A673 (cell line): ENCODE measurements at regions of chr14 and their contacts with region 1.

Region 1: GRCh38 chr14:101964297-101965144 is at the start of gene DYNC1H1:
- DNase-seq: peak; percentile 97
- H3K4me3 ChIP-seq: peak within 1 kb of the TSS; percentile 96
- H3K27ac ChIP-seq: peak within 1 kb of the TSS; percentile 94
- H3K4me1 ChIP-seq: peaks cover 50% of the 10 kb centered on the region
- H3K27me3 ChIP-seq: no peaks in the 10 kb centered on the region
- CTCF ChIP-seq: no peak
- total RNA-seq, gene DYNC1H1: 794 and 833 TPM in 2 replicates

Region 2: DNA sequence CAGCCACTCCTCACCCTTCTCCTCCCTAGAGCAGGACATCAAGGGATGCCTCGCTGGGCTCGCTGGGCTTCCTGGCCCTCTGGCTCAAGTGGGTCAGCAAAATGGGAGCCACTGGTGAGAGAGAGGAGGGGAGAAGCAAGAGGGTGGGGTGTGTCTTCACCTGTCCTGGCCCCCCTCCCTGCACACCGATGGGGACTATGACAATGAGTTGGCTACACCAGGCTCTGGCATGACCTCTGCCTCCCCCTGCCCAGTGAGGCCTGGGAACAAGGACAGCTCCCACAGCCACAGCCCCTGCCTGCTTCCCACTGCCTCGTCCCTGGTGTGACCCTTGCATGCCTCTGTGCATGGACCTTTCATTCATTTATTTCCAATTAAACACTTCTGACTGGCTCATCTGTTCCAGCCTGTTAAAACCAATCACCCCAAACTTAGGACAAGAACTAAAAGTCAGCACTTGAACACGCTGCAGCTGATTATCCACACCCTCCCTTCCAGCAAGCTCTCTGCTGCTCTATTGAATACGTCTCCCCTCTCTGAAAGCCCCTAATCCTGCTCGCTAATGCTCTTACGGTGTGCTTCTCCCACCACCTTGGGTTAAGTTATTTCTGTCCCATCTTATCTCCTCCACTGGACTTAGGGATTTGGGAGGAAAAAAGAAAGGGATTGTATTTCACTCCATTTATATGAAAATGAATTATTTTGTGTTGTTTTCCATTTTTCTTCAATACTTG is 208.8 kb before region 1 on chr14:
- CTCF ChIA-PET with region 1: no interaction called
- POLR2A ChIA-PET with region 1: no interaction called
- intact Hi-C with region 1: no loop called
- DNase-seq: no peak
- H3K4me3 ChIP-seq: no peak overlapping the region
- H3K27ac ChIP-seq: no peak overlapping the region
- H3K4me1 ChIP-seq: no peaks in the 10 kb centered on the region
- H3K27me3 ChIP-seq: peaks cover 23% of the 10 kb centered on the region
- CTCF ChIP-seq: no peak

Region 3: GRCh38 chr14:101774006-101774795 is 190.3 kb before region 1 on chr14:
- CTCF ChIA-PET with region 1: interaction called, 3 read pairs
- POLR2A ChIA-PET with region 1: interaction called, 18 read pairs
- intact Hi-C with region 1: loop called (anchors 5 kb)
- DNase-seq: no peak
- H3K4me3 ChIP-seq: no peak overlapping the region
- H3K27ac ChIP-seq: no peak overlapping the region
- H3K4me1 ChIP-seq: peaks cover 3% of the 10 kb centered on the region
- H3K27me3 ChIP-seq: no peaks in the 10 kb centered on the region
- CTCF ChIP-seq: no peak

Region 4: DNA sequence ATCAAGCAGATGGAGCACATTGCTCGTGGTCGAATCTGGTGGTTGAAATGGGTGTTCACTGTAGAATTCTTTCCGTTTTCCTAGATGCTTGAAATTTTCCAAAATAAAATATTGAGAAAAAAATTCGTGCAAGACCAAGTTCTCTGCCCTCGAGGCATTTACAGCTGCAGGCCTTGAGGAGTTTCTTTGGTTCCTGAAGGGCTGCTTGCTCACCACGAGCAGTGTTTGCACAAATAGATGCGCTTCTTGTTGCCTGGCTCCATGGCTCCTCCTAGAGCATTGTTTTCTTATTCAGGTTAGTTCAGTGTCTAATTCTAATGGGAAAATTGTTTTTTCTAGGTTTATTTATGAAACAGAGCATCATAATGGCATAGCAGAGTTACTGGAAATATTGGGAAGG is 74.6 kb before region 1 on chr14:
- CTCF ChIA-PET with region 1: no interaction called
- POLR2A ChIA-PET with region 1: no interaction called
- intact Hi-C with region 1: no loop called
- DNase-seq: no peak
- H3K4me3 ChIP-seq: no peak overlapping the region
- H3K27ac ChIP-seq: no peak overlapping the region
- H3K4me1 ChIP-seq: no peaks in the 10 kb centered on the region
- H3K27me3 ChIP-seq: no peaks in the 10 kb centered on the region
- CTCF ChIP-seq: 0 out of 2 replicates have a peak, but pooled peaks have one; percentile 17

Region 5: DNA sequence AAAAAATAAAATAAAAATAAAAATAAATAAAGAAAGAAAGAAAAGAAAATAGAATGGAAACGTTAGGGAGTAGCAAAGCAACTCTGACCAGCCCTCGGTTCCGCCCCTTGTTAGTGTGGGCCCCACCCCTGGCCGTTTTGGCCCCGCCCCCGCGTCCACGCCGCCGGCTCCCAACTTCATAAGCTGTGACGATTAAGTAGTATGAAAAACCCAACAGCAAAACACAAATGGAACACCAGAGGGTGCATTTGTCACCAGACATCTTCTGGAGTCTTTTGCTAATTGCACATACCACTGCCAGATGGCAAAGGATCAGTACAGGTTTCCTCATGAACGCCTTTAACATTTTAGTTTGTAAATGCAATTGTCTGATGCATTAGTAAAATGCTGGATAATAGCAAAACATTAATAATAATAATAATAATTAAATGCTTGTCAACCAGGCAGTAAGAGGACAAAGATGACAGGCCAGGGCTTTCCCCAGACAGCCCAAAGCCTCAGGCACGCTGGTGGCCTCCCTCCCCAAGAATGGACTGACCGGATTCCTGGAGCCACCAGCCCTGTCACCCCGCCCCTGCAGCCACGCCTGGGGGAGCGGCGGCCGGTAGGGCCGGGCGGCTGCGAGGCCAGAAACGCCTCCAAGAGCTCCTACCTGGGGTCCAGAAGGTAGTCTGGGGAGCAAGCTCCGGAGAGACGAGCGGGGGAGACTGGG is 98.7 kb after region 1 on chr14:
- CTCF ChIA-PET with region 1: interaction called, 6 read pairs
- POLR2A ChIA-PET with region 1: no interaction called
- intact Hi-C with region 1: loop called (anchors 5 kb)
- DNase-seq: peak; percentile 95
- H3K4me3 ChIP-seq: no peak overlapping the region
- H3K27ac ChIP-seq: no peak overlapping the region
- H3K4me1 ChIP-seq: peaks cover 4% of the 10 kb centered on the region
- H3K27me3 ChIP-seq: no peaks in the 10 kb centered on the region
- CTCF ChIP-seq: peak; percentile 72

Region 6: DNA sequence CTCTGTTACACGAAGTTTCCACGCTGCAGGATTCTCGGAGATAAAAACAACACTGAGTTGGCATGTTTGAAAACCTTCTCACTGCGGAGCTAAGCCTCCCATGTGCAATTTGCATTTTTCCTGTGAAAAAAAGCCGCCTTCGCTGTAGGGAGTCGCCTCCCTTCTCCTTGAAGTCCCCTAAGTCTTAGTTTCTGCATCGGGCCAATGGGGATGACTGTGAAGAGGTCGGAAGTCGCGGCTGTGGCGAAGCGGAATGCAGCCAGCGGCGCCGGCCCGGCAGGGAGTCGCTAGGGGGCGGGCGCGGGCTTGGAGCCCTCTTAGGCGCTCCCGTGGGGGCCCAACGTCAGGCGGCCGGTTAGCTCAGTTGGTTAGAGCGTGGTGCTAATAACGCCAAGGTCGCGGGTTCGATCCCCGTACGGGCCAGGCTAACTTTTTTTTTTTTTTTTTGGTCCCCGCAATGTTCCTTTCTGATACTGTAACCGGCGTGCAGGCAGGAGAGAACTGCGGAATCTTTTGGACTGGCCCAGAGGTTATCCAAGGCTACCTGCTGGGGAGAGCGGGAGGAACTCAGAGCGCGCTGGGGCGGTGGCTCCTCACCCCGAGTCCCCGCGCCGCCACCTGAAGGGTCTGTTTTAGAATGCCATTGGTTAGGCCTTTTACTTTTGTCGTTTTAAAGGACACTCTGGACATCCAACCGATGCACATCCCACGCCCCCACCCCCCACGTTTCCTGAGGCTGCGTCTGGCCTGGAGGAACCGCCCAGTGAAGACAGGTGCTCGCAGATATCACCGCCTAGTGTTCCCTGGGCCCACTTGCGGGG is 352.4 kb after region 1 on chr14:
- CTCF ChIA-PET with region 1: no interaction called
- POLR2A ChIA-PET with region 1: no interaction called
- intact Hi-C with region 1: loop called (anchors 1 kb)
- DNase-seq: peak; percentile 93
- H3K4me3 ChIP-seq: peak overlapping the region; percentile 63
- H3K27ac ChIP-seq: peak overlapping the region; percentile 74
- H3K4me1 ChIP-seq: peaks cover 19% of the 10 kb centered on the region
- H3K27me3 ChIP-seq: no peaks in the 10 kb centered on the region
- CTCF ChIP-seq: peak; percentile 69